Activated T-helper 2 cell treated with anti-CD3 and anti-CD28 coated beads, Interferon-gamma antibody, Interleukin-2, Interleukin-4, amounts not matched to agents 10 μg/mL and 5 μg/mL and 100 μg/mL, durations not matched to agents 14 hours and 24 hours and 36 hours (primary cell): ENCODE measurements at regions of chr9 and their contacts with region 1.

Region 1: GRCh38 chr9:38088006-38088925 is 19.2 kb upstream of the SHB start:
- DNase-seq: peak; percentile 49
- H3K4me3 Mint-ChIP-seq: no peak overlapping the region
- H3K27ac Mint-ChIP-seq: no peak overlapping the region
- H3K4me1 Mint-ChIP-seq: no peaks in the 10 kb centered on the region
- H3K27me3 Mint-ChIP-seq: peaks cover 14% of the 10 kb centered on the region

Region 2: DNA sequence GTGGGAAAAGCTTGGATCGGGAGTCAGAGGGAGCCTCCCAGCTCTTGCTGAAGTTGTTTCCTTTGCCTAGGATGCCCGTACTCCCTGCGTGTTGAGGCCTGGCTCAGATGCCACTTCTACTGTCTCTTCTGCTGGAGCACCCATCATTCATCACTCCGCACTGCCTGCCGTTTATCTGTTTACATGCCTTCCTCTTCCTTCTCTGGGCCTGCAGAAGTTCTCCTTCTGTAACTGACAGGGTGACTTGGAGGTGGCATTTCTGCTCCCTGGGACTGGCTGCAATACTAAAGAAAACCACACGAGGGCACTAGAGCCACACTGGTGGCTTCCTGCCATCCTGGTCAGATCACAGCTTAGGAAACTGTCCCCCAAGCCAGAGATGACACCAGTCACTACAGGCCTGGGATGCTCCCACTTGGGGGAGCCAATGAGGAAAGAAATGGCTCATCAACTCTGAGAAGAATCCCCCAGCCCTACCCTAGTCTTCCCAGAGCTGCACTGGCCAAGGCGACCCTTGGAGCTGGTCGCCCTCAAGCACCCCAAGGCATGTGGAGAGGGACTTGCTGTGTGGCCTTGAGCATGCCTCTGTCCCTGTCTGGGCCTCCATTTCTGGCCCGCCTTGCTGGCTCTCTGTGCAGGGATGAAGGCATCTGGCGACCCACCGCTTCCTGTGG is 174.6 kb before region 1 on chr9:
- intact Hi-C with region 1: loop called (anchors 2 kb)
- DNase-seq: peak; percentile 71
- H3K4me3 Mint-ChIP-seq: no peak overlapping the region
- H3K27ac Mint-ChIP-seq: no peak overlapping the region
- H3K4me1 Mint-ChIP-seq: peaks cover 2% of the 10 kb centered on the region
- H3K27me3 Mint-ChIP-seq: no peaks in the 10 kb centered on the region

Region 3: GRCh38 chr9:38026021-38026809 is 62.1 kb before region 1 on chr9:
- intact Hi-C with region 1: loop called (anchors 10 kb)
- DNase-seq: no peak
- H3K4me3 Mint-ChIP-seq: no peak overlapping the region
- H3K27ac Mint-ChIP-seq: no peak overlapping the region
- H3K4me1 Mint-ChIP-seq: peaks cover 5% of the 10 kb centered on the region
- H3K27me3 Mint-ChIP-seq: no peaks in the 10 kb centered on the region

Region 4: GRCh38 chr9:38047301-38048251 is 40.7 kb before region 1 on chr9:
- intact Hi-C with region 1: no loop called
- DNase-seq: no peak
- H3K4me3 Mint-ChIP-seq: no peak overlapping the region
- H3K27ac Mint-ChIP-seq: no peak overlapping the region
- H3K4me1 Mint-ChIP-seq: peaks cover 6% of the 10 kb centered on the region
- H3K27me3 Mint-ChIP-seq: no peaks in the 10 kb centered on the region

Region 5: GRCh38 chr9:38068866-38069629 is 19.2 kb before region 1 on chr9 and contains the start of gene SHB:
- intact Hi-C with region 1: no loop called
- DNase-seq: peak; percentile 68
- H3K4me3 Mint-ChIP-seq: peak within 1 kb of the TSS; percentile 64
- H3K27ac Mint-ChIP-seq: no peak within 1 kb of the TSS
- H3K4me1 Mint-ChIP-seq: peaks cover 25% of the 10 kb centered on the region
- H3K27me3 Mint-ChIP-seq: peaks cover 33% of the 10 kb centered on the region
- total RNA-seq, gene SHB: 1.7 and 1.9 TPM in 2 replicates

Region 6: DNA sequence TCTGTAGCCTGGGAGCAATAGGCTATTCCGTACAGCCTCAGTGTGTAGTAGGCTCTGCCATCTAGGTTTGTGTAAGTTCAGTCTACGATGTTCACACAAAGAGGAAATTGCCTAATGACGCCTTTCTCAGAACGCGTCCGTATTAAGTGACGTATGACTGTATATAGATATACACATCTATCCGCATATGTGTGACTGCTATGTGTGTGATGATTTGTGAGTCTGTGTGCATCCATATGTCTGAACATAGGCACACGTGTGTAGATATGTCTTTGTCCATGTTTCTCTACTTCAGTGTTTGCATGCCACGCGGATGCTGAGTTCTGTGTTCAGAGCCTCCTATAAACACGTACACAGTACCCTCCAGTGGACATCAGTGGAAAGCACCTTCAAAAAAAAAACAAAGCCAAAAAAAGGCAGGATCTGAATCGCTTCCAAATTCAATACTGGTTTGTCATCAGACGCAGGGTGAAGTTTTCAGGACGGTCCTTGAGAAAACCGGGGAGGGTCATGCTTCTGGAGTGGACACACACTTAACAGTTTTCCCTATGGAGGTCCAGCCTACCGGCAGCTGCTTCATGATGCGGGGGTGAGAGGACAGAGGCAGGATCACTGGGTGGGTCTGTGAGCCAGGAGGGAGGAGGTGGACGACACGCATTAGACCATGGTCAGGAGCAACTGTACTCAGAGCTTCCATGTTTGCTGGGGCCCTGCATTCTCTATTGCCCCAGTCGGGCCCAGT is 274.8 kb after region 1 on chr9:
- intact Hi-C with region 1: loop called (anchors 10 kb)
- DNase-seq: no peak
- H3K4me3 Mint-ChIP-seq: peak overlapping the region; percentile 46
- H3K27ac Mint-ChIP-seq: no peak overlapping the region
- H3K4me1 Mint-ChIP-seq: peaks cover 4% of the 10 kb centered on the region
- H3K27me3 Mint-ChIP-seq: no peaks in the 10 kb centered on the region